HCT116 (cell line): ENCODE measurements at regions of chr14 and their contacts with region 1.

Region 1: DNA sequence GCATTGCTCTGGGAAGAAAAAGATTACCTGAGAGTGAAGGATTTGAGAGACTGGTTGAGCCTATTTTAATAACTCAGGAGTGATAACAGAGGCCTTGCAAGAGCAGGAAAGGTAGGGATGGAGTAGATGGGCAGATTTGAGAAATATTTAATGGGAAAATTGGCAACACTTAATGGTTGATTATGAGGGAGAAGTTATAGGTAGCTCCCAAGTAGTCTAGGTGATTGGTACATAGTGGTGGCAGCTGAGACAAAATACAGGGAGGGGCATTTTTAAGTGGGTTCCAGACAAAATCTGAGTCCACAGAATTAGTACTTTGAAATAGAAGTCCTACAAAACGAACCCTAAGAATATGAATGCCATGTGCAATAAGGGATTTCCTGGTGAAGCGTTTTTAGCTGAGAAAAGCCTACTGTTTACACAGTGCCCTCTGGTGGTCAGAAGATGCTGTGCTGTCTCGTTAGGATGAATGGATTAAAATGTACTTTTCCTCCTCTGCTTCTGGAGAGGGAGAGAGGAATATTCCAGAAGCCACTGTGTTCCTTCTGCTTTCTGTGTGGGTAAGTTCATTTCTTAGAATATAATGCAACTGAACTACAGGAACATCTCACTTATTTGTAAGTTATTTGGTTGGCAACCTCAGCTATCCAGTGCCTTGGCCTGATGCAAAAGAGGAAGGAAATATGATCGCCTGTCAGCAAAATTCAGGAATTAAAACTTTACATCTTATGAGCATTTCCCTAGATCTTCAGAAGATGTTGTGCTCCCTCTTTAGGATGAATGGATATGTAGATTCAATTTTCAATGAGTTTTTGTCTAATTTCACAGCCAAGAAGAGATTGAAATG is 6.5 kb downstream of the ZBTB1 start:
- DNase-seq: peak; percentile 56
- ATAC-seq: peak; percentile 82
- H3K4me3 ChIP-seq: no peak overlapping the region
- H3K27ac ChIP-seq: no peak overlapping the region; the same call in 1 of the 2 replicates
- H3K4me1 ChIP-seq: peaks cover 15 to 36% of the 10 kb centered on the region in 2 experiments; a peak in 3 of 4 replicates
- H3K27me3 ChIP-seq: no peaks in the 10 kb centered on the region
- CTCF ChIP-seq: peak in 2 of 3 experiments; percentile 89 to 95; a peak in 4 of 6 replicates
- POLR2A ChIP-seq: no peak
- RAD21 ChIP-seq: no peak

Region 2: DNA sequence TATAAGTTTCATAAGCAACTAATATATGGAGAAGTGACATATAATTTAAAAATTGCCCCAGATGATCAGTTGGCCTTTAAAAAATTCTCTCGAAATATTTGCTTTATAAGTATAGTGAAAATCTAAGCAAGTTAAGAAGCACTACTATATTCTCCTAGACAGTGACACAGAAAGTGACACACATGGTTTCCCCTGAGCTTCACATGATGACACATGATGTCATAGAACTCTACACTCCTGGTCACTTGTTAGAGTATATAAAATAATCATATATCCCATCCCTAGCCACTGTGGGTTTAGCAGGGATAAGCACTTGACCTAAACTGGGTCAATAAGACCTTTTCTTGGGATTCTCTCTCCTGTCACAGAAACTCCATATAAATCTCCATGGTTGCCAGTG is 165.5 kb before region 1 on chr14:
- CTCF ChIA-PET with region 1: interaction called, 17 read pairs
- POLR2A ChIA-PET with region 1: no interaction called
- RAD21 ChIA-PET with region 1: interaction called, 3 to 7 read pairs
- intact Hi-C with region 1: loop called (anchors 2 kb)
- DNase-seq: no peak
- ATAC-seq: no peak
- H3K4me3 ChIP-seq: no peak overlapping the region
- H3K27ac ChIP-seq: no peak overlapping the region
- H3K4me1 ChIP-seq: no peaks in the 10 kb centered on the region
- H3K27me3 ChIP-seq: no peaks in the 10 kb centered on the region
- CTCF ChIP-seq: no peak
- POLR2A ChIP-seq: no peak
- RAD21 ChIP-seq: no peak

Region 3: GRCh38 chr14:64522591-64523355 is 11.7 kb after region 1 on chr14:
- CTCF ChIA-PET with region 1: interaction called, 12 read pairs
- POLR2A ChIA-PET with region 1: no interaction called
- RAD21 ChIA-PET with region 1: no interaction called
- intact Hi-C with region 1: no loop called
- DNase-seq: no peak
- ATAC-seq: no peak
- H3K4me3 ChIP-seq: no peak overlapping the region
- H3K27ac ChIP-seq: no peak overlapping the region
- H3K4me1 ChIP-seq: no peaks in the 10 kb centered on the region
- H3K27me3 ChIP-seq: no peaks in the 10 kb centered on the region
- CTCF ChIP-seq: no peak
- POLR2A ChIP-seq: no peak
- RAD21 ChIP-seq: no peak

Region 4: GRCh38 chr14:64636208-64636979 is 125.3 kb after region 1 on chr14:
- CTCF ChIA-PET with region 1: interaction called, 7 read pairs
- POLR2A ChIA-PET with region 1: no interaction called
- RAD21 ChIA-PET with region 1: no interaction called
- intact Hi-C with region 1: loop called (anchors 10 kb)
- DNase-seq: peak; percentile 47
- ATAC-seq: peak; percentile 98
- H3K4me3 ChIP-seq: no peak overlapping the region
- H3K27ac ChIP-seq: no peak overlapping the region
- H3K4me1 ChIP-seq: peaks cover 2 to 8% of the 10 kb centered on the region in 2 experiments; a peak in 2 of 4 replicates
- H3K27me3 ChIP-seq: no peaks in the 10 kb centered on the region
- CTCF ChIP-seq: peak; percentile 78 to 94 (median 79)
- POLR2A ChIP-seq: no peak
- RAD21 ChIP-seq: peak; percentile 87

Region 5: GRCh38 chr14:64704143-64704742 is 193.2 kb after region 1 on chr14 and contains the start of gene PLEKHG3:
- CTCF ChIA-PET with region 1: no interaction called
- POLR2A ChIA-PET with region 1: no interaction called
- RAD21 ChIA-PET with region 1: no interaction called
- intact Hi-C with region 1: no loop called
- DNase-seq: no peak
- ATAC-seq: peak; percentile 68
- H3K4me3 ChIP-seq: peak within 1 kb of the TSS; percentile 78 to 82
- H3K27ac ChIP-seq: peak within 1 kb of the TSS; percentile 86
- H3K4me1 ChIP-seq: peaks cover 46 to 61% of the 10 kb centered on the region in 2 experiments
- H3K27me3 ChIP-seq: no peaks in the 10 kb centered on the region
- CTCF ChIP-seq: no peak
- POLR2A ChIP-seq: no peak
- RAD21 ChIP-seq: no peak
- total RNA-seq, gene PLEKHG3: 55.6 TPM